Activated naive CD4-positive, alpha-beta T cell treated with anti-CD3 and anti-CD28 coated beads for 36 hours (primary cell): ENCODE measurements at regions of chr17 and their contacts with region 1.

Region 1: GRCh38 chr17:11997147-11997846 is at the start of gene ZNF18:
- DNase-seq: peak; percentile 95
- H3K4me3 Mint-ChIP-seq: peak within 1 kb of the TSS; percentile 88
- H3K27ac Mint-ChIP-seq: peak within 1 kb of the TSS; percentile 82
- H3K4me1 Mint-ChIP-seq: peaks cover 24% of the 10 kb centered on the region
- H3K27me3 Mint-ChIP-seq: no peaks in the 10 kb centered on the region
- total RNA-seq, gene ZNF18: 8.1 to 8.2 TPM

Region 2: GRCh38 chr17:10729334-10730193 is 1267.7 kb before region 1 on chr17 and contains the start of gene TMEM220:
- CTCF ChIA-PET with region 1: no interaction called
- intact Hi-C with region 1: loop called (anchors 10 kb)
- DNase-seq: peak; percentile 37
- H3K4me3 Mint-ChIP-seq: peak within 1 kb of the TSS; percentile 84
- H3K27ac Mint-ChIP-seq: peak within 1 kb of the TSS; percentile 38
- H3K4me1 Mint-ChIP-seq: peaks cover 19% of the 10 kb centered on the region
- H3K27me3 Mint-ChIP-seq: no peaks in the 10 kb centered on the region
- total RNA-seq, gene TMEM220: 0.79 to 0.94 TPM

Region 3: GRCh38 chr17:11495613-11496012 is 501.7 kb before region 1 on chr17:
- CTCF ChIA-PET with region 1: no interaction called
- intact Hi-C with region 1: no loop called
- DNase-seq: no peak
- H3K4me3 Mint-ChIP-seq: no peak overlapping the region
- H3K27ac Mint-ChIP-seq: no peak overlapping the region
- H3K4me1 Mint-ChIP-seq: no peaks in the 10 kb centered on the region
- H3K27me3 Mint-ChIP-seq: peaks cover 3% of the 10 kb centered on the region

Region 4: DNA sequence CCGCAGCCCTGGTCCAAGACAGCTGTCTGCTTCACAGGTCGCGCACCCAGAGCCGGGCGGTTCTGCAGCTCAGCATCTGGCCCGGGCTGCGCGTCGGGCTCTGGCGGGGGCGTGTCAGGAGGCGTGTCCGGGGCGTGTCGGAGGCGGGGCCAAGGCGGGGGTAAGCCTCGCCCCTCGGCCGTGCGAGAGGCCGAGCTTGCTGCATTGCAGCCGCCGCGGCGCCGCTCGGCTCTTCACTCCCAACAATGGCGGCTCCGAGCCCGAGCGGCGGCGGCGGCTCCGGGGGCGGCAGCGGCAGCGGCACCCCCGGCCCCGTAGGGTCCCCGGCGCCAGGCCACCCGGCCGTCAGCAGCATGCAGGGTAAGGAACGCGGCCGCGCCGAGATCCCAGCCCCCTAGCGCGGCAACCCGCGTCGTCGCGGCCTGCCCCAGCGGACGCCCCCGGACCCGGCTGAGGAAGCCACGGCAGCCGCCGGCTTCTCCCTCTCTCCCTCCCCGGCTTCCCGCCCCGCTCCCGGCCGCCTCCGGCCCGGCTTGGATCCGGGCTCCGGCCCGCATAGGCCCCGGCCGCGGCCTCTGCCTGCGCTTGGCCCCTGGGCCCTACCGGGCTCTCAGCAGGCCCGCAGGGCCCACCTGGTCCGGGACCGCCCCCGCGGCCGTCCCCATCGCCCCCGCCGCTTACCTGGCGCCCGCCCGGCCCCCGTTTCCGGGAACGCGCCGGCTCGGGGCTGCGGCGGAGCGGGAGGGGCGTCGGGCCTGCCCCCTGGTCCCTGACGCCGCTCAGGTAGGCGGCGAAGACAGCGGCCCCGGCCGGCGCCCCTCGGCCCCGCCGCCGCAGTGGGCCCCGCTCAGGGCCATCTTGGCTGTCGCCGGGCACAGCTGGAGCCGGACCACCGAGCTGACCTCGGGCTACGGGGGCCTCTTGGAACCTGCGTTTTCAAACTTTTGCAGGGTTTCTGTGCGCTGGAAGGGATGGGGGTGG is 23.6 kb after region 1 on chr17 and contains the start of gene MAP2K4:
- CTCF ChIA-PET with region 1: interaction called, 3 read pairs
- intact Hi-C with region 1: loop called (anchors 1 kb)
- DNase-seq: peak; percentile 93
- H3K4me3 Mint-ChIP-seq: peak within 1 kb of the TSS; percentile 73
- H3K27ac Mint-ChIP-seq: peak within 1 kb of the TSS; percentile 73
- H3K4me1 Mint-ChIP-seq: peaks cover 45% of the 10 kb centered on the region
- H3K27me3 Mint-ChIP-seq: no peaks in the 10 kb centered on the region
- total RNA-seq, gene MAP2K4: 22.5 to 23.5 TPM

Region 5: GRCh38 chr17:12053552-12053951 is 56.3 kb after region 1 on chr17:
- CTCF ChIA-PET with region 1: no interaction called
- intact Hi-C with region 1: loop called (anchors 2 kb)
- DNase-seq: no peak
- H3K4me3 Mint-ChIP-seq: peak overlapping the region; percentile 45
- H3K27ac Mint-ChIP-seq: no peak overlapping the region
- H3K4me1 Mint-ChIP-seq: peaks cover 70% of the 10 kb centered on the region
- H3K27me3 Mint-ChIP-seq: no peaks in the 10 kb centered on the region

Region 6: DNA sequence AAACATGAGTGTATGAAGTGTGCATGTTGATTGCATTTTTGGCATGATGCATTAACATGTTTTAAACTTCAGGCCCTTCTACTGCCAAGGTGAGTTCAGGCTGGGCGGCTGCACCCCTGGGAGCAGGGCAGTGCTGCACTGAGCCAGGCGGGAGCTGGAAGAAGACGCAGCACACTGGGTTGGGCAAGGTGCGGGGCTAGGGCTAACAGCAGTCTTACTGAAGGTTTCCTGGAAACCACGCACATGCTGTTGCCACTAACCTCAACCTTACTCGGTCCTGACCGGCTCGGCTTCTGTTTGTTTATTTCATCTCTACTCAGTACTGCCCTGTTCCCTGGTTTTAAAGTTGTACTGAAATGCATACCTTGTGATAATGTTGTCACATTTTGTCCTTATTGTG is 84.4 kb after region 1 on chr17:
- CTCF ChIA-PET with region 1: no interaction called
- intact Hi-C with region 1: loop called (anchors 5 kb)
- DNase-seq: no peak
- H3K4me3 Mint-ChIP-seq: no peak overlapping the region
- H3K27ac Mint-ChIP-seq: no peak overlapping the region
- H3K4me1 Mint-ChIP-seq: peaks cover 13% of the 10 kb centered on the region
- H3K27me3 Mint-ChIP-seq: no peaks in the 10 kb centered on the region